Activated CD4-positive, alpha-beta T cell treated with anti-CD3 and anti-CD28 coated beads for 36 hours (primary cell): ENCODE measurements at regions of chr13 and their contacts with region 1.

Region 1: DNA sequence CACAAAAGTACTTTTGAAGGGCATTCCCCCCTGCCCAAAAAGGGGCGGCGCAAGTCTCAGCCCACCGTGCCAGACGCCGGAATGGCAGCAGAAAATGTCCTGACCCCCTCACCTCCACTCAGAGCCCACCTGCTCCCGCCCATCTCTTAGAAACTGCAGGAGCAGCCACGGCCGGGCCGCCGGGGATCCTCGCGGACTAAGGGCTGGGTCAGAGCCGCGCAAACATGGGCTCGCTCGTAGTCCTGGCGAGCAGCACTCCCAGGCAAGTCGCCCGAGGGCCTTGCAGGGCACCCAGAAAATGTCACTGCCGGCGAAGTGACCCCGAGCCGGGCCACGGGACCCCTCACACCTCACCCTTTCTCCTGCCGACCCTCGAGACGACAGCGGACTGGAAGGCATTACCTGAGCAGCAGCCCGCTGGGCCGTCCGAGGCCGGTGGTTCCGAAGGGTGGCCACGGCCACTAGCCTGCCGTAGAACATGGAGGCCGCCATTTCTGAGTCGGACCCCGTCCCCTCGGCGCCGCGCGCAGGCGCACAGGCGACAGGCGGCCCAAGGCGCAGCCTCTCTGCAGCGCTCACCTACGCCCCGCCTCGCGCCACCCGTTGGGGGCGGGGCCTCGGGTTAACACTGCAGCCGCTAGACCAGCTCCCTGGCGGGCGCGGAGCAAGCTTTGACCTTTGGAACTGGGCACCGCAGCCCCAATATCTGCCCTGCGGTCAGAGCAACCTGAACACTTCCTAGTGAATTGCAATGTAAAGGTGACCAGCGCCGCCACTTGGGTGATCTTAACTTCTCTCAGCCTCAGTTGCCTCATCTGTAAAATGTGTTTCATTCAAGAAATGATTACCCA is at the start of gene SUCLA2:
- DNase-seq: peak; percentile 96
- ATAC-seq: peak; percentile 100
- H3K4me3 Mint-ChIP-seq: peak within 1 kb of the TSS; percentile 85
- H3K27ac Mint-ChIP-seq: peak within 1 kb of the TSS; percentile 95
- H3K4me1 Mint-ChIP-seq: peaks cover 31% of the 10 kb centered on the region
- H3K27me3 Mint-ChIP-seq: no peaks in the 10 kb centered on the region
- total RNA-seq, gene SUCLA2: 34.9 to 44.6 TPM

Region 2: DNA sequence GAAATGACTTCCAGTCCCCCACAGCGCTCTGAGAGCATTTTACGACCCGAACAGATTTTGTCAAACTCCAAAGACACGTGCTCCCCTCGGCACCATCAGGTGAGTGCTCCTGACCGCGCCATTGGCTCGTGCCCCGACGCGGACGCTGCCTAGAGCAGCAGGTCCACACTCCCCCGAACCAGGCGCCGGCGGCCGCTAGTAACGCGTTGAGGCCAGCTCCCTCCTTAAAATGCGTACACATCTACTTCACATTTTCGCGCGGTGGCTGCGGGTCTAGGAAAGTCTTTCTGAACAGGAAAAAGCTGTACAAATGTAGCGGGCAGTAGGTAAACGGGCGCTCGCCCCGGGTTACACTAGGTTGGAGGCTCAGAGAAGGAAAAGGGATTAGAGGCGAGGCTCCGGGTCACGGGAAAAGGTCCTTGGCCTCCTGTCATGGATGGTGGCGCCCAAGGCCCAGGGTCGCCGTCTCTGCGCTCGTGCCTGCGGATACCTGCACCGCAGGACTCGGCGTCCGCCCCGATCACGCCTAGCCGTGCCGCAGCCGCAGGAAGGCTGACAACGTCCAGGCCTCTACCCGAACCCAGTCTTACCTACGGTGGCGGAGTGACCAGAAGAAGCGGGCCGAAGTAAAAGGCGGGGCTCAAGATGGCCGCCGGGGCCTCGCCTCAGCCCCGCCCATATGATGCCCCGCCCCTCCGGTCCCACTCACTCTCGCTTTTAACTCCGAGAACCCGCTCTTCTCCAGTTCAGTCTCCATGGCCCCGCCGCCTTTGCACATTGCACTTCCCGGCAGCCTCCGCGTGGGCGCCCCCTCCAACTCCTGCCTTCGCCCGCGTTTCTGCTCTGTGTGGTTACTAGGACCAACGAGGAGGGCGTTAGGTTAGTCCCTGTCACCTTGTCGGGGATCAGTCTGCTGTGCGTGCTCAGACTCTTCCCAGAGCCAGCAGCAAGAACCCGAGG is 1204.2 kb before region 1 on chr13 and contains the start of gene ESD:
- CTCF ChIA-PET with region 1: no interaction called
- POLR2A ChIA-PET with region 1: no interaction called
- intact Hi-C with region 1: loop called in 1 of 2 experiments (anchors 1 kb)
- DNase-seq: peak; percentile 97
- ATAC-seq: peak; percentile 95
- H3K4me3 Mint-ChIP-seq: peak within 1 kb of the TSS; percentile 98
- H3K27ac Mint-ChIP-seq: peak within 1 kb of the TSS; percentile 98
- H3K4me1 Mint-ChIP-seq: peaks cover 38% of the 10 kb centered on the region
- H3K27me3 Mint-ChIP-seq: no peaks in the 10 kb centered on the region
- total RNA-seq, gene ESD: 150 to 162 TPM

Region 3: DNA sequence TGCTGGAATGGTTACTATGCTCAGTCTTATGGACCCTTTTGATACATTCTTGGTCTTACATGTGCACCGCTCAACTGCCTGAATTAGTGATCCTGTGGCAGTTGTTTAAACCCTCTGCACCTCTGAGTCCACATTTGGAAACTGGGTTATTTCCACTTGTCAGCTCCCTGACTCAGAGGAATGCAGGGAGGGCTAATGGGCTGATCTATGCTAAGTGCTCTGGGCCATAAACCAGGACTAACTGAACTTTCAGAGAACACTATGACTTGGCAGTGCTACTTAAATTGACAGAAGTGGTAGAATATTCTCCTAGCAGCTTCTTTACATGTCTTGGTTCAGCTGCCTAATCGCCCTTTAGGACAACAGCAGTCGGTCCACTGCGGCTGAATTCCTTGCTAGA is 120.7 kb after region 1 on chr13:
- CTCF ChIA-PET with region 1: no interaction called
- POLR2A ChIA-PET with region 1: no interaction called
- intact Hi-C with region 1: no loop called
- DNase-seq: no peak
- ATAC-seq: no peak
- H3K4me3 Mint-ChIP-seq: no peak overlapping the region
- H3K27ac Mint-ChIP-seq: no peak overlapping the region
- H3K4me1 Mint-ChIP-seq: peaks cover under 1% of the 10 kb centered on the region
- H3K27me3 Mint-ChIP-seq: peaks cover 6% of the 10 kb centered on the region